ENCODE measurements at regions of chr7 and their contacts with region 1.

Region 1: DNA sequence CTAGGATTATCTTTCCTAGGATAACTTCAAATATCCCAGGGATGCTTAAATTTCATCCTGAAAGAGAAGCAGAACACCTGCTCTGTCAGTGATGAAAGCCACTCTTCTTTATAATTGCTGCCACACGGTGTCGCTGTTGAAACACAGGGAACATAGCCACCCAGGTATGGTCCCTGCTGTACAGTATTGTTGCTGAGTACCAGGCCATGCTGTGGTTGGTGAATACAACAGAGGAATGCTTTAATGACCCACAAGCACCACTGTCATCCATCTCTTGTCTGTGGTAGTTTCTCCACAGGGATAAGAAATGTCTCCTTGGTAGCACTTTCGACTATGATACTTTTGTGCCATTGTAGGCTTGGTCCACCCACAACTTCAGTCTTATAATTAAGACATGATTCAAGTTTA is 70.6 kb upstream of the STARD3NL start:
- DNase-seq: peak in 1 of 2 donors; percentile 45
- ATAC-seq: peak in 6 of 8 donors; percentile 69 to 78 (median 74)
- H3K4me3 ChIP-seq: no peak overlapping the region
- H3K27ac ChIP-seq: no peak overlapping the region
- H3K4me1 ChIP-seq: peaks cover 0 to 4% (median 0%) of the 10 kb centered on the region in 9 donors
- H3K27me3 ChIP-seq: peaks cover 0 to 6% (median 0%) of the 10 kb centered on the region in 7 donors
- CTCF ChIP-seq: peak; percentile 68 to 86 (median 81)

Region 2: GRCh38 chr7:37916673-37917660 is 190.5 kb before region 1 on chr7 and contains the start of gene SFRP4:
- intact Hi-C with region 1: loop called in 4 of 10 experiments (anchors 5 to 10 kb)
- DNase-seq: peak; percentile 61 to 67
- ATAC-seq: peak; percentile 57 to 83 (median 62)
- H3K4me3 ChIP-seq: peak within 1 kb of the TSS; percentile 31 to 62 (median 55)
- H3K27ac ChIP-seq: peak within 1 kb of the TSS; percentile 12 to 82 (median 69)
- H3K4me1 ChIP-seq: peaks cover 4 to 50% (median 32%) of the 10 kb centered on the region in 9 donors
- H3K27me3 ChIP-seq: peaks cover 0 to 69% (median 17%) of the 10 kb centered on the region in 7 donors
- CTCF ChIP-seq: peak; percentile 35 to 73 (median 68)
- total RNA-seq, gene SFRP4: 0.23 to 9.9 (median 3.4) TPM

Region 3: DNA sequence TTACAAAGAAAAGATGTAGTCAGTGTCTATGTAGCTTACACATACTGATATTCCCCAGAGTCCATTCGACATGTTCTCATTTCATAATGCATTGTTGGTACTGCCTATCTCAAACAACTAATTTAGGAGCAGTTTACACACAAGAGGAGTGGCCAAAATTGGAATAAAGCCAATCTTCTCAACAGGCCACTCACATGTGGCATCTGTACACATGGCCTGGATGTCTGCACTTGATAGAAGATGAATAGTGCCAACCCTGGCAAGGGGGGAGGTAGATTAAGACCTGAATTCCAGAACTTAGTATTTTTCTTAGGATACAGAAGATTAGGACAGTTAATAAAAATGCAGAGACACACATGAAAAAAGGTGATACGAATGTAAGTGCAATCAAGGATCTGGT is 54.7 kb before region 1 on chr7:
- intact Hi-C with region 1: no loop called
- DNase-seq: no peak
- ATAC-seq: no peak
- H3K4me3 ChIP-seq: no peak overlapping the region
- H3K27ac ChIP-seq: no peak overlapping the region
- H3K4me1 ChIP-seq: no peaks in the 10 kb centered on the region
- H3K27me3 ChIP-seq: peaks cover 0 to 4% (median 0%) of the 10 kb centered on the region in 7 donors
- CTCF ChIP-seq: no peak

Region 4: GRCh38 chr7:38222481-38223096 is 115.1 kb after region 1 on chr7:
- intact Hi-C with region 1: loop called (anchors 1 to 5 kb)
- DNase-seq: peak in 1 of 2 donors; percentile 36
- ATAC-seq: peak in 7 of 8 donors; percentile 66 to 85 (median 71)
- H3K4me3 ChIP-seq: no peak overlapping the region
- H3K27ac ChIP-seq: peak overlapping the region in 1 of 10 donors; percentile 41
- H3K4me1 ChIP-seq: peaks cover 0 to 16% (median 0%) of the 10 kb centered on the region in 9 donors
- H3K27me3 ChIP-seq: no peaks in the 10 kb centered on the region
- CTCF ChIP-seq: peak; percentile 73 to 93 (median 89)

Region 5: DNA sequence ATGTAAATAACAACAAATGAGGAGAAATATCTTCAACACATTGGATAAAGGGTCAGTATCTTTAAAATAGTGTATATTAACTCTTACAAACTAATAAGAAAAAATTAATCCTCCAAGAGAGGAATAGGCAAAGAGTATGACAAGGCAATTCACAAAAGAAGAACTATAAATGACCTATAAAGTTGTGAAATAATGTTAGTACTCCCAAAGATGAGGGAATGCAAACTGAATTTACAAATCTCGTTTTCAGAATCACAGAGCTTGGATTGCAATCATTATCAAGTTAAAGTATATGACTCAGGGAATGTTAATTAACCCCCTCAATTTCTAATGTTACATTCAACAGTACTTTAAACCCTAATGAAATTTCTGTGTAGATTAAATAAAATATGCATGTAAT is 253.3 kb after region 1 on chr7:
- intact Hi-C with region 1: loop called in 1 of 10 experiments (anchors 5 kb)
- DNase-seq: no peak
- ATAC-seq: no peak
- H3K4me3 ChIP-seq: peak overlapping the region in 1 of 10 donors; percentile 36
- H3K27ac ChIP-seq: no peak overlapping the region
- H3K4me1 ChIP-seq: peaks cover 0 to 20% (median 0%) of the 10 kb centered on the region in 9 donors
- H3K27me3 ChIP-seq: no peaks in the 10 kb centered on the region
- CTCF ChIP-seq: no peak

Region 6: DNA sequence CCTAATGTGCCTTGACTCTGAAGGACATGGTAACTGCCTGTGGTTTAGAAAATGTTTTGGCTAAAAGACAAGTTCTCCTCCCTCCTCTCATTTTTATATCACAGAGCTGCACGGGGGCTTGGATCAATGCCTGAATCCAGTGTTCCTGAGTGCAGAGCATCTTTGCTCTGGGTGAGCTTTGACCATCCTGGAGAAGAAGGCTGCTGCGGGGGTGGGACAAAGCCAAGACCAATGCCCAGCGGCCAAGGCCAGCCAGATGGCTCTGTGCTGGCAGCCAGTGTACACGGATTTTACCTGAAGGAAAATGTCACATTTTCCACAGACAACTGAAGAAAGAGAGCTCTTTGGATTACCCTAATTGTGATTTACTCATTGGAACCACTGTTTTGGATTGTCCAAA is 268.0 kb after region 1 on chr7:
- intact Hi-C with region 1: loop called in 6 of 10 experiments (anchors 5 to 10 kb)
- DNase-seq: no peak
- ATAC-seq: no peak
- H3K4me3 ChIP-seq: no peak overlapping the region
- H3K27ac ChIP-seq: no peak overlapping the region
- H3K4me1 ChIP-seq: peaks cover 0 to 11% (median 0%) of the 10 kb centered on the region in 9 donors
- H3K27me3 ChIP-seq: no peaks in the 10 kb centered on the region
- CTCF ChIP-seq: no peak

Measured in heart right ventricle (tissue), 16 donors.